CD4-positive, alpha-beta memory T cell (primary cell): ENCODE measurements at regions of chr6 and their contacts with region 1.

Region 1: DNA sequence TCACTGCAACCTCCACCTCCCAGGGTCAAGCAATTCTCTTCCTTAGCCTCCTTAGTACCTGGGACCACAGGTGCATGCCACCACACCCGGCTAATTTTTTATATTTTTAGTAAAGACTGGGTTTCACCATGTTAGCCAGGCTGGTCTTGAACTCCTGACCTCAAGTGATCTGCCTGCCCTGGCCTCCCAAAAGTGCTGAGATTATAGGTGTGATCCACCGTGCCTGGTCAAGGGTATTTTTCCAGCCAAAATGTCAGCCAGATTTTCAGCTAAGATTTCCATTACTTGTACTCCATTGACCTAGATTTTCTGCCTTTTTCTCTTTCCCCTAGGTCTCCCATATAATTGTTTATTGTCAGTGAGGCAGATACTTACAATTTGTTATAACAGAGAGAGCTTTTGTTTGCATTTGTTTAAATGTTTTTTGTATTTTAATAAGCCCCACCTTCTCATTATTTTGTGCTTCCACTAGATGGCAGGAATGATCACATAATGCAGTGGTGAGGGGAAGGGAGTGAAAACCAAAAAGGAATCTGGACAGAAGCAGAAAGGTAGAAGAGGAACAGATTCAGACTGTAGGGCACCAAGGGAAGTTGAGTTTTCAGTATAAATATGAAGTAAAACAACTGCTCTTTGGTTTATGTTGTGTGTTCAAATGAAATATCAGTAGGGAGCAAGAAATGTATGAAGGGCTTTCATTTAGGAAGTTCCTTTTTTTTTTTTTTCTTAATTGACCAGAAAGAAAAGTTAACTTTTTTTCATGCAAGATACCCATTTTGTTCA is 29.7 kb downstream of the RPF2 start:
- DNase-seq: peak in 4 of 5 donors; percentile 26 to 43 (median 35)
- H3K4me3 ChIP-seq: no peak overlapping the region
- H3K4me3 Mint-ChIP-seq: no peak overlapping the region
- H3K27ac ChIP-seq: no peak overlapping the region
- H3K27ac Mint-ChIP-seq: peak overlapping the region in 4 of 7 donors; percentile 0 to 17 (median 4)
- H3K4me1 ChIP-seq: no peaks in the 10 kb centered on the region
- H3K4me1 Mint-ChIP-seq: peaks cover 0 to 5% (median 4%) of the 10 kb centered on the region in 4 donors
- H3K27me3 ChIP-seq: no peaks in the 10 kb centered on the region
- H3K27me3 Mint-ChIP-seq: no peaks in the 10 kb centered on the region

Region 2: DNA sequence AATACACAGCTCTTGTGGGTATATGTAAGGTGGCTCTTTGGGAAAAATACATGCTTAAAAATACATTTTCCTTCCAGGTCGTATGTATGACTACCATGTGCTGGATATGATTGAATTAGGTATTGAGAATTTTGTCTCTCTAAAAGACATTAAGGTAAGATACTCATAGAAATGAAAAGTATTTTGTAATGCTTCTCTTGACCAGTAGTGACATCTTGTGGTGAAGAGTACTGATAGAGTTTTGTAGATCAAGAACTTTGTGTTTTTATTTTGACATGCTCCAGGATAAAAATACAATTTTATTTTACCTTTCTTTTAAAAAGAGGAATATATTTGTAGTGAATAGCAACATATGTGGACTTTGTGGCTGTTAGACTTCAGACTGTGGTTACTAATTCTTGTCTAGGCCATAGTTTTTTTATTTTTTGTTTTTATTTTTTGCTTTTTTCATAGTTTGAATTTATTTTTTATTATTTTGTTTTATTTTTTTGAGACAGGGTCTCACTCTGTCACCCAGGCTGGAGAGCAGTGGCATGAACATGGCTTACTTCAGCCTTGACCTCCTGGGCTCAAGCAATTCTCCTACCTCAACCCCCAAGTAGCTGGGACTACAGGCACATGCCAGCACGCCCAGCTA is 11.8 kb before region 1 on chr6:
- CTCF ChIA-PET with region 1: interaction called, 17 read pairs
- POLR2A ChIA-PET with region 1: no interaction called
- intact Hi-C with region 1: no loop called
- DNase-seq: peak in 4 of 5 donors; percentile 21 to 35 (median 25)
- H3K4me3 ChIP-seq: no peak overlapping the region
- H3K4me3 Mint-ChIP-seq: no peak overlapping the region
- H3K27ac ChIP-seq: no peak overlapping the region
- H3K27ac Mint-ChIP-seq: peak overlapping the region in 2 of 7 donors; percentile 27 to 51
- H3K4me1 ChIP-seq: no peaks in the 10 kb centered on the region
- H3K4me1 Mint-ChIP-seq: peaks cover 0 to 4% (median 1%) of the 10 kb centered on the region in 4 donors
- H3K27me3 ChIP-seq: no peaks in the 10 kb centered on the region
- H3K27me3 Mint-ChIP-seq: no peaks in the 10 kb centered on the region

Region 3: GRCh38 chr6:111024681-111025080 is 13.1 kb after region 1 on chr6:
- CTCF ChIA-PET with region 1: interaction called, 27 read pairs
- POLR2A ChIA-PET with region 1: no interaction called
- intact Hi-C with region 1: no loop called
- DNase-seq: no peak
- H3K4me3 ChIP-seq: no peak overlapping the region
- H3K4me3 Mint-ChIP-seq: no peak overlapping the region
- H3K27ac ChIP-seq: no peak overlapping the region
- H3K27ac Mint-ChIP-seq: peak overlapping the region in 3 of 7 donors; percentile 19 to 42 (median 28)
- H3K4me1 ChIP-seq: no peaks in the 10 kb centered on the region
- H3K4me1 Mint-ChIP-seq: peaks cover 0 to 4% (median 2%) of the 10 kb centered on the region in 4 donors
- H3K27me3 ChIP-seq: no peaks in the 10 kb centered on the region
- H3K27me3 Mint-ChIP-seq: no peaks in the 10 kb centered on the region

Region 4: DNA sequence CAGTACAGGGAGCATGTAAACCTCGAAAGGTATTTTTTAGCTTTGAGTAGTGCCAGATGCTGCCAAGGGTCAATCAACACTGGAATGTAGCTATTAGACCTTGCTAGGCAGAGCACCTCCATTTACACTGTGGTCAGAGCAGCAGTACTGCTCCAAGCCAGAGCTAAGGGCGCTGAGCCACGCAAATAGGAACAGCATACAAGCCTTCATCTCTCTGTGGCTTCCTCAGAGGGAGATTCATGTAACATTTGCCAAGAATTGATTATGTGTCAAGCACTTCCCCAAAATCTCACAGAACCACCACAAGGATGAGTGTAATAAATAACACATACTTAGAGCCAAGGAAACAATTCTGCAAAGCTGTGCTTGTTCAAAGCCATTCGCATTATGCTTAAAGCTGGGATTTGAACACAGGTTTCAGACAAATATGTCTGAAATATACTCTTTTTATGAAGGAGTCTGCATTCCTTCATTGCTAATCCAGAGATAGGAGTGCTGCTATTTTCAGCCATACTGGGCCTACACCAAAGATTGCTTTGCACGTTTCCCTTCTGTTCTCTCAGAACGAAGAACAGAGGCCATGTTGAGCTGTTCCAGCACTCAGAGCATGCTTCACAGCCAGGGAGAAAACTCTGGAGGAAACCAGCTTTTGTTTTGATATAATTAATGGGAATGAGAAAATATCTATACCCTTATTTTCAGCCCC is 173.4 kb after region 1 on chr6:
- CTCF ChIA-PET with region 1: no interaction called
- POLR2A ChIA-PET with region 1: no interaction called
- intact Hi-C with region 1: no loop called
- DNase-seq: no peak
- H3K4me3 ChIP-seq: no peak overlapping the region
- H3K4me3 Mint-ChIP-seq: no peak overlapping the region
- H3K27ac ChIP-seq: no peak overlapping the region
- H3K27ac Mint-ChIP-seq: no peak overlapping the region
- H3K4me1 ChIP-seq: no peaks in the 10 kb centered on the region
- H3K4me1 Mint-ChIP-seq: peaks cover 0 to 1% (median 0%) of the 10 kb centered on the region in 4 donors
- H3K27me3 ChIP-seq: no peaks in the 10 kb centered on the region
- H3K27me3 Mint-ChIP-seq: no peaks in the 10 kb centered on the region

Region 5: DNA sequence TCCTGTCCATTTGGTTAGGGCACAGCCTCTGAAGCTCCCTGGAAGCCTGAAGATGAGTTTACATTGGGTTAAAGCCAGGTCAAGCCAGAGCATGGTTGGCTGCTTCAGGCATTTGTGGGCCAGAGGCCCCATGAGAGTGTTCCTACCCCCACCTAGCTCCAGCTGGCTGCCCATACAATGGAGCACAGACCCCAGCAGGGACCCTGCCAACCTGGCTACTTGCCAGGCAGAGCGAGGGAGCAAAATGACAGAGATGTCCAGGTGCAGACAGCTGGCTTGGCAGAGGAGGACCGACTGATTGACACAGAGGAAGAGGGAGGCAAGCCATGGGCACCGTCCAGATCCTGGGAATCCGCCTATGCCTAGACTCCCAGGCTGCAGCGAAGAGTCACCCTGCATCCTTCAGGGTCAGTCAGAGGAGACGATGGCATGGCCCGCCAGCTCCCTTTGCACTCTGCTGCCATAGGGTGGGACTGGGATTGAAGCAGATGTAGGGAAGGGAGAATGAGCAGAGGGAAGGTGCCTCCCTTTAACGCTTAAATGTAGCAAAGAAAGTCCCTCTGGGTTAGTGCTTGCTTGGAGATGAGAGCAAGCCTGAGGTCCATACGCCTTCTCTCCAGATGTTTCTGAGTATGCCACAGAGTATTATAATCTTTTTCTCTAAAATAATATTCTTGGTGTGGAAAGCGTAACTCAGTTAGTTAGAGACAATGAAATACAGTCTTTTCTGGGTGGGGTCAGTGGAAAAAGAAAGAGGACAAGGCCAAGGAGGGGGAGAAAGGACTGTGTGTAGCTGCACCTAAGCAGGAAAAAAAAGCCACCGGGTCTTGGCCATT is 939.3 kb after region 1 on chr6:
- CTCF ChIA-PET with region 1: no interaction called
- POLR2A ChIA-PET with region 1: no interaction called
- intact Hi-C with region 1: no loop called
- DNase-seq: no peak
- H3K4me3 ChIP-seq: no peak overlapping the region
- H3K4me3 Mint-ChIP-seq: no peak overlapping the region
- H3K27ac ChIP-seq: no peak overlapping the region
- H3K27ac Mint-ChIP-seq: peak overlapping the region in 1 of 7 donors; percentile 68
- H3K4me1 ChIP-seq: no peaks in the 10 kb centered on the region
- H3K4me1 Mint-ChIP-seq: peaks cover 0 to 4% (median 0%) of the 10 kb centered on the region in 4 donors
- H3K27me3 ChIP-seq: no peaks in the 10 kb centered on the region
- H3K27me3 Mint-ChIP-seq: peaks cover 0 to 1% of the 10 kb centered on the region in 2 donors